ENCODE measurements at regions of chr9 and their contacts with region 1.

Region 1: DNA sequence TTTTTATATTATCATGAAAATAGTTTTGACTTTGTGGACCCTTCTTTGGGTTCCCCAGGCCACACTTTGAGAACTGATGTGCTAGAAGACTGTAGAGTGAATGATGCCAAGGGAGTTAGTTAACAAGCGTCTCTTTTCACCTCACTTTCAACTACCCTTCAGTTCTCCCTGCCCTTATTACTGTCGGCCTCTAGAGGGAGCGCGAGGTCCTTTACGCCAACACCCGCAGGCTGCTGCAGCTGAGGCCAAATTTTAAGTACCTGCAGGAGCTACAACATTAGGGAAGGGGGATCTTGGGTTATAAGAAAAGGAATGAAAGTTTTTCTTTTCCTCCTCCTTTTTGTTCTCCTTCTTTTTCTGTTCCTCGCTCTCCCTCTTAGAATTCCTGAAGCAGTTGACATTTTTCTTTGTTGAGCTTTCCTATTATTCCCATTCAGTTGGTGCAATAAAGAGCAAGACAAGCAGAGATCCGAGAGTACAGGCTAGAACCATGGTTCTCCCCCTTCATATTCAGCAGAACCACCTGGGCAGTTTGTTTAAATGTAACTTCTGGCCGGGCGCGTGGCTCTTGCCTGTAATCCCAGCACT is 84.0 kb downstream of the ZFAND5 start:
- DNase-seq: peak; percentile 87

Region 2: GRCh38 chr9:72827950-72828731 is 547.1 kb after region 1 on chr9:
- intact Hi-C with region 1: loop called (anchors 5 kb)
- DNase-seq: no peak